ENCODE measurements at regions of chr14 and their contacts with region 1.

Region 1: GRCh38 chr14:51996148-51996746 is 6.9 kb downstream of the RTRAF start:
- DNase-seq: no peak
- H3K4me3 ChIP-seq: no peak overlapping the region
- CTCF ChIP-seq: peak; percentile 31

Region 2: DNA sequence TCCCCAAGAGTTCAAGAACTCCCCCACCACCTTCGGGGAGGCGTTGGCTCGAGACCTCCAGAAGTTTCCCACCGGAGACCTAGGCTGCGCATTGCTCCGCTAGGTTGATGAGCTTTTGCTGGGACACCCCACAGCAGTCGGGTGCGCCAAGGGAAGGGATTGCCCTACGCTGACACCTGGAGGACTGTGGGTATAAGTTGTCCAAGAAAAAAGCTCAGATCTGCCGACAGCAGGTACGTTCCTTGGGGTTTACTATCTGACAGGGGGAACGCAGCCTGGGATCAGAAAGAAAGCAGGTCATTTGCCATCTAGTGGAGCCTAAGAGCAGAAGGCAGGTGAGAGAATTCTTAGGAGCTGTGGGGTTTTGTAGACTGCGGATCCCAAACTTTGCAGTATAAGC is 245.7 kb before region 1 on chr14:
- CTCF ChIA-PET with region 1: no interaction called
- POLR2A ChIA-PET with region 1: no interaction called
- DNase-seq: no peak
- H3K4me3 ChIP-seq: no peak overlapping the region
- CTCF ChIP-seq: no peak

Region 3: DNA sequence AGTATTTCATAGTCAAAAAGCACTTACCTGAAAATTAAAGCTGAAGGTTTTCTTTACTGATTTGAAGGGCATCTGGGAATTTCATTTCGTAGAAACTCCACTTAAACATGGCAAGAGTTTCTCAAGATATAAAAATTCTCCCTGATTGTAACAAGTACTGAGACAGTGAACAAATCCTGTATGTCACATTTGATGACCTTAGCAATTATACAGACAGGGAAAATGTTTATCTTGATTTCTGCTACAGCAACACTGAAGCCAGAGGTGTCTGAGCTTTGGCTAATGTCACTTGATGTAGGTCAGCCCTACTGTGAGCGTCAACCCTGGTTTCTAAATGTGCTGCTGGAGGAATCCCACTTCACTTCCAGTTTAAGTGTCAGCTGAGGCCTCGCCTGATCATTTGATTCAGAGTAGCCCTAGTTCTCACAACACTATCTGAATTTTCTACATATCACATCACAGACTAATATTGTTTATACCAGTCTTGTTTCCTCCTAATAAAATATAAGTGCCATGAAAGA is 14.0 kb after region 1 on chr14:
- CTCF ChIA-PET with region 1: interaction called, 14 read pairs
- POLR2A ChIA-PET with region 1: no interaction called
- DNase-seq: no peak
- H3K4me3 ChIP-seq: no peak overlapping the region
- CTCF ChIP-seq: no peak

Region 4: DNA sequence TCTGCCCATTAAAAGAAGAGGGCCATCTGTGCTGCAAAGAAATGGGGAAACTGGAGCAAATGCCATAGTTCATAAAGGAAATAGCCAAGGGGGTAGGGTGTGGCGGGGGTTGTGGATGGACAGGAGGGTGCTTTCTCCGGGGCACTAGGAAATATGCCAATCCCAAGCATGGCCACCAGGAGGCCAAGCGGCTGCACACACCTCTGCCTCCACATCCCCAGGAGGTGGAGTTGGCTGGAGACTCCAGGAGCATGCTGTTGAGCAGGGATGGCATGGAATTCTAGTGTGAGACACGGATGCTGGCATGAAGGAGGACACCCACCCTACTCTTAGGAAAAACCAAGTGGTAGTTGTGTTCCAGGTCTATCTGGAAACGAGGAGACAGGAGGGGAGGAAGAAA is 47.4 kb after region 1 on chr14:
- CTCF ChIA-PET with region 1: interaction called, 18 read pairs
- POLR2A ChIA-PET with region 1: no interaction called
- DNase-seq: no peak
- H3K4me3 ChIP-seq: no peak overlapping the region
- CTCF ChIP-seq: peak; percentile 59

Region 5: DNA sequence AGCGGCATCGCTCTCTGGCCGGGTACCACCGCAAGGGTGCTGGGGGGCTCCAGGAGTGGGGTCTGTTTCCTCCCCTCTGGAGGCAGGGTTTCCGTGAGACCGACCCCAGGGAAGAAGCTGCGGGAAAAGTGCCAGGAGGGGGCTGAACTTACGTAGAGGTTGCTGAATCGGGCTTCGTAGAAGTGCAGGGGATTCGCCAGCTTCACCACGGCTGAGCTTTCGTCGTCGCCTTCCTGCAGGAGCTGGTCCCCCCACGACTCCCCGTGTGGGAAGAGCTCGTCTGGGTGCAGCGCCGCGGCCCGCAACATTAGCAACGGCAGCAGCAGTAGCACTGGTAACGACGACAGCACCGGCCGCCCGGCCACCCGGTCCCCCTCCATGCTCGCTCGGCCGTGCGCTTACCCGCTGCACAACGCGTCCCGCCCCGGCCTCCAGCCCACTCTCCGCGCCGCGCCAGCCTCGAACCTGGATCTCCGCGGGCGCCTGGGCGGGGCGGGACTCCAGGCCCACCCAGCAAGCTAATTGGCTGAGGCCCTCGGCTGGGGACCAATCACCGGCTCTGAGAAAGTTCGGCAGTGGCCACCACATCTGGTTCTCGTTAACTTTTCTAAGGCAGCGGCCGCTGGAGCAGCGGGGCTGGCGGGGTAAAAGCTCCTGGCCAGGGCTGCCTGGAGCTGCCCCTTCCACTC is 72.5 kb after region 1 on chr14 and contains the start of gene NID2:
- CTCF ChIA-PET with region 1: interaction called, 35 read pairs
- POLR2A ChIA-PET with region 1: interaction called, 3 read pairs
- DNase-seq: no peak
- H3K4me3 ChIP-seq: peak within 1 kb of the TSS; percentile 88
- CTCF ChIP-seq: no peak

Region 6: GRCh38 chr14:52124791-52125661 is 128.8 kb after region 1 on chr14:
- CTCF ChIA-PET with region 1: interaction called, 182 read pairs
- POLR2A ChIA-PET with region 1: no interaction called
- DNase-seq: peak; percentile 42
- H3K4me3 ChIP-seq: no peak overlapping the region
- CTCF ChIP-seq: no peak

Region 7: GRCh38 chr14:52131640-52132320 is 135.5 kb after region 1 on chr14:
- CTCF ChIA-PET with region 1: interaction called, 182 read pairs
- POLR2A ChIA-PET with region 1: no interaction called
- DNase-seq: peak; percentile 72
- H3K4me3 ChIP-seq: no peak overlapping the region
- CTCF ChIP-seq: peak; percentile 78